ENCODE measurements at regions of chr3 and their contacts with region 1.

Region 1: DNA sequence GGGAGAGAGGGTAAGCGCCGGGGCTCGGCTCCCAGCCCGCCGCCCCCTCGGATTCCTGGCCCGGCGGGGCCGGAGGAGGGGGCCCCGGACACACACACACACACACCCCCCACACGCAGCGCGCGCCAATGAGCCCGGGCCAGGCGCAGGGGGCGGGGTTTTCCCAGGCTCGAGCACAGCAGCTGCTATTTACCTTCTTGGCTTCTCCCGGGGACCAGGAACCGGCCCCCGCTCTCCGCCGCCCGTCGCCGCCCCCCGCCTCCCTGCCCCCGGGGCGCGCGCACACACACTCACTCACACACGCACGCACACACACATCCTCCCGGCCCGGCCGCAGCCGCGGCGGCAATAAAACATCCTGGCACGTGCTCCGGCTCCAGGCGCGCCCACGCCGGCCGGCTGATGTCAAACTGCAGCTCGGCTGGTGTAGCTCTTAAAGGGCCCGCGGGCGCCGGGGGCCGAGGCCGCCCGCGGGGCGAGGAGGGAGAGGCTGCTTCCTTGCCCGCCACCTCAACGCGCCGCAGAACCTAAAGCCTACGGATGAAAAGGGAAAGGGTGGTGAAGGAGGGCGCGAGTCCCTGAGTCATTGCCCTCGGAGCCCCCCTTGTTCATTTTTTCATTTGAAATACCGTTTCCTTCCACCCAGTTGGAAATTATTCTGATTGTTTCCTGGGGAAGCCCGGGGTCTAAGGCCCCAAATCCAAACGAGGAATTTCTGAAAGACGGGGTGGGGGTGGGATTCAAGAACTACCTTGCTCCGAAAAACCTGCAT is 1.0 kb upstream of the HES1 start:
- DNase-seq: peak; percentile 94
- ATAC-seq: peak; percentile 76

Region 2: GRCh38 chr3:193788189-193788991 is 346.6 kb before region 1 on chr3:
- intact Hi-C with region 1: loop called (anchors 2 kb)
- DNase-seq: peak; percentile 66
- ATAC-seq: peak; percentile 94

Region 3: DNA sequence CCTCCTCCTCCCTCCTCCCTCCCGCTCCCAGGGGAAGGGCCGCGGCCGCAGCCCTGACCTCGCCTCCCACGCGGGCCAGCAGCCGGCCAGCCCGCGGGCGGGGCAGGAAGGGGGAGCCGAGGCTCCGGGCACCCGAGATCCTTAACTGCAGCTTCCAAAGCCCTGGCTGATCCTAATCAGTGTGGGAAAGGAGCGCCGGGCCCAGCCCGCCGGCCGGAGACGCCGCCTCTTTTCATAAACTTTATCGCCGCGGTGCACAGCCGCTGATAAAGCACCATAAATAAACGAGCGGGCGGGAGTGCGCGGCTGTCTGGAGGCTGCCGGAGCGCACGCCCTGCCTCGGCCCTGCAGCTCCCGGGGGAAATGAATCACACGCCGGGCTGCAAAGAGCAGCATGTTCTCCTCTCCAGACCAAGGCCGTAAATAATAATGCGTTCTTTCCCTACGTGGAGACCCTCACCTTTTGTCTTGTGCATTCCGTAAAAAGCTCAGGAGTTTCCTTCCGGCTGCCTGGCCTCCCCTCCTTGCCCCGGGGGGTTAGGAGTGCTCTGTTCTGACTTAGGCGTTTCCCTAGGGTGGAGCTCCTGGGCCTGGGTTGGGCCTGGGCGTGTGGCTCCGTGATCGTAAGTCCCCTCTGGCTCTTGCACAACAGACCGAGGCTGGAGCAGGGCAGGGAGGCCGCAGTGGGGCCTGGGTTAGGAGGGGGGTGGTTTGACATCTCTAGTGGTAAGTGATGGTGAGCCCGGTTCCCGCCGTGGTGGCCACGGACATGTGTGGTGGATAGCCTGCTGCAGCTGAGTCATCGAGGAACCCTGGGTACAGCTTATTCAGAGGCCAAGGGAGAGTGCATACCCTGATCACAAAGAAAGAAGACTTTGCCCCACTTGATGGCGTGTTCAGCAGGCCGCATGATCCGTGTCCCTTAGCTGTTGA is 131.6 kb before region 1 on chr3:
- intact Hi-C with region 1: loop called (anchors 5 kb)
- DNase-seq: peak; percentile 93
- ATAC-seq: peak; percentile 93

Region 4: DNA sequence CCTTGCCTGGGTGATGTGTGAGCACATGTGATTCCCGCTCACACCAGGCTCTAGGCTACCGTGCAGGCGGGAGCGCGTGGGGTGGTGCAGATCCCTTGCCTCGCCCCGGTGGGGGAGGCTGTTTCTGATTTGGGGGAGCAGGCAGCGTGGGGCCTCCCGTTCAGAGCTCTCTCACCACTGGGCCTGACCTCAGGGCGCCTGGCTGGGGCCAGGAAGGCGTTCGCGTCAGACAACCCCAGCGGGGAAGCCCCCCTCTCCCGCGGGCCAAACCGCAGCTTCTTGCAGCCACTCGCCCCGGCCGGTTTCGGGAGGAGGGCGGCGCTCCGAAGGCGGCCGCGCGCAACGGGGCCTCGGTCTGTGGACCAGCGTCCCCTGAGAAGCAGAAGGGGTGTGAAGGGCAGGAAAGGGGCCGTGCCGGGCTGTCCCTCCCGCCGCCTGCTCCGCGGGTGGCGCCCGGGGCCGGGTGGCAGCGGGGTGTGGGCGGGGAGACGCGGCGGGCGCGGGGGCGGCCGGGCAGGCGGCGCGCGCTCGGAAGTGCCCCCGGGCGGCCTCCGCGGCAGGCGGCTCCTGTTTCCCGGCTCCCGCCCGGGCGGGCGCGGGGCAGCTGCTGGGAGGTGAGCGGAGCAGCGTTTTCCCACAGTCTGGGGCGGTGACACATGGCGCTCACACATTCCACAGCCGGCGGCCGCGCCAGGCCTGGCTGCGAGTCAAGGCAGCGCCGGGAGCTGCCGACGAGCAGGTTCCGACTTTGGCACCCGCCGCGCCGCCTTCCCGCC is 64.1 kb before region 1 on chr3:
- intact Hi-C with region 1: loop called (anchors 5 kb)
- DNase-seq: peak; percentile 92
- ATAC-seq: peak; percentile 91

Region 5: DNA sequence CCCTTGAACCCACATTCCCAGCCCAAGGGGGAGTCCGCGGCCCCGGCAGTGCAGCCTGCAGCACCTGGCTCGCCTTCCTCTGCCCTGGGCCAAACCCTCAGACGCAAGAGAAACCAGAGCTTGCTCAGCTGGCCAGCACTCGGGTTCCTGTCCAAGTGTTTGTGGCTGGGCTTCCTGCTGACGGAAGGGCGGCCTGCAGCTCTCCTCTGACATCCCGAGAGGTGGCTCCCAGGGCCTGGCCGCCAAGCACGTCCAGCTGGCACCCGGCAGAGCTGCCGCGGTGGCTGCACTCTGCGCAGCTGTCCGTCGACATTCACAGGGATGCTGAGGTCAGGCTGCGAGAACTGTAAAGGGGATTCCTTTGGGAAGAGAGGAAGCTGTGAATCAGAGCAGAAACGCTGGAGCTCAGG is 130.5 kb after region 1 on chr3:
- intact Hi-C with region 1: loop called (anchors 5 kb)
- DNase-seq: peak; percentile 95
- ATAC-seq: peak; percentile 85